Mammary epithelial cell (primary cell): ENCODE measurements at regions of chr3 and their contacts with region 1.

Region 1: GRCh38 chr3:30693470-30694120 is 87.2 kb downstream of the TGFBR2 start:
- DNase-seq: peak; percentile 41
- H3K4me3 ChIP-seq: no peak overlapping the region
- H3K27ac ChIP-seq: no peak overlapping the region
- H3K4me1 ChIP-seq: peaks cover 24% of the 10 kb centered on the region
- H3K27me3 ChIP-seq: no peaks in the 10 kb centered on the region
- CTCF ChIP-seq: peak; percentile 74 to 82

Region 2: GRCh38 chr3:30042274-30042859 is 651.2 kb before region 1 on chr3:
- CTCF ChIA-PET with region 1: no interaction called
- dilution Hi-C with region 1: no loop called
- in situ Hi-C with region 1: no loop called
- intact Hi-C with region 1: loop called (anchors 1 kb)
- DNase-seq: peak; percentile 39
- H3K4me3 ChIP-seq: no peak overlapping the region
- H3K27ac ChIP-seq: no peak overlapping the region
- H3K4me1 ChIP-seq: no peaks in the 10 kb centered on the region
- H3K27me3 ChIP-seq: no peaks in the 10 kb centered on the region
- CTCF ChIP-seq: peak; percentile 72 to 75

Region 3: DNA sequence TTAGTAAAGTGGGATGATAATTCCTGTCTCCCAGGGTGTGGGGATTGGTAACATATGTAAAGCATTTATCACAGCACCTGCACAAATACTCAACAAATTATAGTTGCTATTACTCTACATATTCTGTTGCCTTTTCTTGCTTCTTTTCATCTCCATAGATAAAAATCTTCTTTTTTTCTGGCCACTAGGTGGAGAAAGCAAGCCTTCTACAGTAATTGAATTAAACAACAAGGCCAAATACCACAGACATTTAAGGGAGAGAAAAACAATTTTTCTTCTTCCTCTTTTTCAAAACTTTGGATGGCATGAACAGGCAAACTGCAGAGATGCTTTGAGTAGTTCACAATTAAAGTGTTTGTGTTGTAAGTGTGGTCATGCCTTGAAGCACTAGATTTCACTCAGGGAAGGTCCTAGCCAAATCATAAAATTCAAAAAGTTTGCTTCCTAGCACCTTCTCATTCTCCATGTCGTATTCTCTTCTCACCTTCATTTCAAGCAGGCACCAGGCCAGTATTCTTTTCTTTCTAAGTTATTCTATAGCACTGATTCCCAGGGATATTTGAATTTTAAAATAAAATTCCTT is 580.6 kb before region 1 on chr3:
- CTCF ChIA-PET with region 1: interaction called, 3 read pairs
- dilution Hi-C with region 1: no loop called
- in situ Hi-C with region 1: loop called in 1 of 2 experiments (anchors 25 kb)
- intact Hi-C with region 1: loop called (anchors 1 kb)
- DNase-seq: peak; percentile 31
- H3K4me3 ChIP-seq: no peak overlapping the region
- H3K27ac ChIP-seq: no peak overlapping the region
- H3K4me1 ChIP-seq: peaks cover 2% of the 10 kb centered on the region
- H3K27me3 ChIP-seq: no peaks in the 10 kb centered on the region
- CTCF ChIP-seq: peak; percentile 58 to 63

Region 4: GRCh38 chr3:30135190-30135589 is 558.4 kb before region 1 on chr3:
- CTCF ChIA-PET with region 1: no interaction called
- dilution Hi-C with region 1: no loop called
- in situ Hi-C with region 1: no loop called
- intact Hi-C with region 1: loop called (anchors 1 kb)
- DNase-seq: no peak
- H3K4me3 ChIP-seq: no peak overlapping the region
- H3K27ac ChIP-seq: no peak overlapping the region
- H3K4me1 ChIP-seq: no peaks in the 10 kb centered on the region
- H3K27me3 ChIP-seq: no peaks in the 10 kb centered on the region
- CTCF ChIP-seq: no peak

Region 5: GRCh38 chr3:30319713-30320112 is 373.9 kb before region 1 on chr3:
- CTCF ChIA-PET with region 1: no interaction called
- dilution Hi-C with region 1: no loop called
- in situ Hi-C with region 1: no loop called
- intact Hi-C with region 1: loop called (anchors 2 kb)
- DNase-seq: peak; percentile 63
- H3K4me3 ChIP-seq: no peak overlapping the region
- H3K27ac ChIP-seq: no peak overlapping the region
- H3K4me1 ChIP-seq: peaks cover 4% of the 10 kb centered on the region
- H3K27me3 ChIP-seq: no peaks in the 10 kb centered on the region
- CTCF ChIP-seq: peak; percentile 62 to 69

Region 6: DNA sequence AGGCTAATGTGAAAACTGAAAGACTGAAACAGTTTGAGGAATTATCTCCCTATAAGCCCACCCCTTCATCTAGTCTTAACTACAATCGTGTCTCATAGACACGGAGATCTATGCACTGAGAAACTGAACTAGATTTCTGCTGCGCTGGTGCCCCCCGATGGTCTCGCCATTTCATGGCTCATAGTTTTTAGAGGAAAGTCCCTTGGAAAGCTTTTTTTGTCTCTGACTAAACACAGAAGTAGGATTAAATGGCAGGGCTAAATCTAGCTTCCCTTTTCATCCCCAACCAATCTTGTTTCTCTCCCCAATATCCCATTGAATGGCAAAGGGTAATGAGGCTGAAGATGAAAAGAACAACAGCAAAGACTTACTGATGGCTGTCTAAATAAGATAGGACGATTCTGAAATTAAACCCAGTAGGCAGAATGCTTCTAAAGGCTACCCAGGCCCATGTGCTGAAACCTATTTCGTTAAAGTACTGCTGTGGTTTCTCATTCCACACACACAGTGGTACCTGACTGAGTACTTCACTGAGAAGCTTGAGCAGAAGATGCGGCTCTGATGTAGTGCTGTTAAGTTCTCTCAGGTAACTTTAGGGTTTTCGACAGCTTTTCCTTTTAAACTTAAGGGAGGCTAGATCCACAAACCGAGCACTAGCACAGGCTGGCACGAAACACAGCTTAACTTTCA is 58.2 kb after region 1 on chr3:
- CTCF ChIA-PET with region 1: no interaction called
- dilution Hi-C with region 1: no loop called
- in situ Hi-C with region 1: no loop called
- intact Hi-C with region 1: loop called (anchors 2 kb)
- DNase-seq: peak; percentile 24
- H3K4me3 ChIP-seq: no peak overlapping the region
- H3K27ac ChIP-seq: no peak overlapping the region
- H3K4me1 ChIP-seq: peaks cover 31% of the 10 kb centered on the region
- H3K27me3 ChIP-seq: no peaks in the 10 kb centered on the region
- CTCF ChIP-seq: peak; percentile 19 to 22

Region 7: GRCh38 chr3:30984855-30985749 is 291.5 kb after region 1 on chr3:
- CTCF ChIA-PET with region 1: no interaction called
- dilution Hi-C with region 1: no loop called
- in situ Hi-C with region 1: no loop called
- intact Hi-C with region 1: no loop called
- DNase-seq: no peak
- H3K4me3 ChIP-seq: no peak overlapping the region
- H3K27ac ChIP-seq: no peak overlapping the region
- H3K4me1 ChIP-seq: no peaks in the 10 kb centered on the region
- H3K27me3 ChIP-seq: no peaks in the 10 kb centered on the region
- CTCF ChIP-seq: no peak